Sigmoid colon (tissue), 7 donors: ENCODE measurements at regions of chr1 and their contacts with region 1.

Region 1: DNA sequence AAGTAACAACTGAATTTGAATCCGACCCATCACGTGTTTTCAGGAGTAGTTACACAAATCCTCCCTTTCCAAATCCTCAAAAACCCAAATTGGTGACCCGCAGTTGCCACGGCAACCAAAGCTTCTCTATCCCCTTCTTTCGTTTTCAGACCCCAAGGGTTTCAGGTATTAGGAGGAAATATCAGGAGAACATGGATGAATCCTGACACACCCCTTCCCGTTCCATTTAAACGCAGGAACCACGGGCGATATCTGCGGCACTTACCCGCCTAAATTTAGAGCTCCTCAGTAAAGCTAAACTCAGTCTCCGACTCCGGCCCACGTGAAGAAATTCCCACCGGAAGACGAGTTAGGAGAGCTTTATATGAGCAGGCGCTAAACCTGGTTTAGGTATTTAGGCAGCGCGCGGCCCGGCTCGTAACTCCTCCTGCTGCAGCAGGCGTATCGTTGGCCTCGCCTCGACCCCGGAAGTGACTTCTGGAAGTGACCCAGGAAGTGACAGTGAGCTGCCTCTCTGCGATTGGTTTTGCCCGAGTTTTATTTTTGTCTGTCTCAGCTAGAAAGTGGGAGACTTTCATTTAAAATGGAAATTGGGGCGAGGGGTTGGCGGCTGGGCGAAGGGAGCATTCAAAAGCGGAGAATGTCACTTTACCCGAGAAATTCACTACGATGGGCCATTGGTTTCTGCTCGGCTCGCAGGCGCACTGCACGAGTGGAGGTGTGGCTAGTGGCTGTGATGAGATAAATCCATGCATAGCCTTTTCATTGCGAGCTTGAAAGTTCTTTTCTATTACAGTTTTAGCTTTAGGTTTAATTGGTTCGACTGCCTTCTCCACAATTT is at the start of gene TAF1A:
- DNase-seq: peak; percentile 94
- H3K4me3 ChIP-seq: peak within 1 kb of the TSS; percentile 59 to 70 (median 62)
- H3K27ac ChIP-seq: peak within 1 kb of the TSS; percentile 76 to 82 (median 80)
- H3K4me1 ChIP-seq: peaks cover 0 to 20% (median 16%) of the 10 kb centered on the region in 4 donors
- H3K27me3 ChIP-seq: no peaks in the 10 kb centered on the region
- CTCF ChIP-seq: no peak
- EP300 ChIP-seq: no peak
- POLR2A ChIP-seq: no peak
- total RNA-seq, gene TAF1A: 2.3 to 7.2 (median 4.8) TPM

Region 2: GRCh38 chr1:221371705-221372104 is 1218.0 kb before region 1 on chr1:
- intact Hi-C with region 1: no loop called
- DNase-seq: no peak
- H3K4me3 ChIP-seq: no peak overlapping the region
- H3K27ac ChIP-seq: no peak overlapping the region
- H3K4me1 ChIP-seq: no peaks in the 10 kb centered on the region
- H3K27me3 ChIP-seq: no peaks in the 10 kb centered on the region
- CTCF ChIP-seq: no peak
- EP300 ChIP-seq: no peak
- POLR2A ChIP-seq: no peak

Region 3: GRCh38 chr1:222634180-222635013 is 44.7 kb after region 1 on chr1:
- intact Hi-C with region 1: loop called (anchors 1 kb)
- DNase-seq: peak; percentile 74
- H3K4me3 ChIP-seq: no peak overlapping the region
- H3K27ac ChIP-seq: peak overlapping the region in 1 of 4 donors; percentile 2
- H3K4me1 ChIP-seq: no peaks in the 10 kb centered on the region
- H3K27me3 ChIP-seq: no peaks in the 10 kb centered on the region
- CTCF ChIP-seq: peak; percentile 74 to 88 (median 80)
- EP300 ChIP-seq: no peak
- POLR2A ChIP-seq: no peak